HAP-1 (cell line): ENCODE measurements at regions of chr21 and their contacts with region 1.

Region 1: GRCh38 chr21:14259747-14260146 is 43.8 kb downstream of the RBM11 start:
- DNase-seq: peak; percentile 12 to 74
- H3K4me3 ChIP-seq: no peak overlapping the region
- H3K4me1 ChIP-seq: 0 out of 2 replicates have a peak, but pooled peaks cover 3% of the 10 kb centered on the region
- H3K27me3 ChIP-seq: no peaks in the 10 kb centered on the region; the same call in 1 of the 2 replicates

Region 2: GRCh38 chr21:15483138-15483780 is 1223.5 kb after region 1 on chr21:
- in situ Hi-C with region 1: loop called (anchors 25 kb)
- DNase-seq: peak; percentile 75 to 86
- H3K4me3 ChIP-seq: no peak overlapping the region
- H3K4me1 ChIP-seq: no peaks in the 10 kb centered on the region
- H3K27me3 ChIP-seq: peaks cover 2% of the 10 kb centered on the region; the same call in 1 of the 2 replicates

Region 3: GRCh38 chr21:15592271-15592860 is 1332.6 kb after region 1 on chr21:
- in situ Hi-C with region 1: loop called (anchors 25 kb)
- DNase-seq: peak in 1 of 2 experiments; percentile 12
- H3K4me3 ChIP-seq: no peak overlapping the region
- H3K4me1 ChIP-seq: no peaks in the 10 kb centered on the region
- H3K27me3 ChIP-seq: no peaks in the 10 kb centered on the region; the same call in 1 of the 2 replicates